ENCODE measurements at regions of chr4 and their contacts with region 1.

Region 1: GRCh38 chr4:98601708-98602107 is 56.7 kb downstream of the TSPAN5 start:
- DNase-seq: no peak
- H3K4me3 Mint-ChIP-seq: peak overlapping the region; percentile 72
- H3K27ac Mint-ChIP-seq: peak overlapping the region; percentile 95
- H3K4me1 Mint-ChIP-seq: peaks cover 54% of the 10 kb centered on the region
- H3K27me3 Mint-ChIP-seq: no peaks in the 10 kb centered on the region

Region 2: DNA sequence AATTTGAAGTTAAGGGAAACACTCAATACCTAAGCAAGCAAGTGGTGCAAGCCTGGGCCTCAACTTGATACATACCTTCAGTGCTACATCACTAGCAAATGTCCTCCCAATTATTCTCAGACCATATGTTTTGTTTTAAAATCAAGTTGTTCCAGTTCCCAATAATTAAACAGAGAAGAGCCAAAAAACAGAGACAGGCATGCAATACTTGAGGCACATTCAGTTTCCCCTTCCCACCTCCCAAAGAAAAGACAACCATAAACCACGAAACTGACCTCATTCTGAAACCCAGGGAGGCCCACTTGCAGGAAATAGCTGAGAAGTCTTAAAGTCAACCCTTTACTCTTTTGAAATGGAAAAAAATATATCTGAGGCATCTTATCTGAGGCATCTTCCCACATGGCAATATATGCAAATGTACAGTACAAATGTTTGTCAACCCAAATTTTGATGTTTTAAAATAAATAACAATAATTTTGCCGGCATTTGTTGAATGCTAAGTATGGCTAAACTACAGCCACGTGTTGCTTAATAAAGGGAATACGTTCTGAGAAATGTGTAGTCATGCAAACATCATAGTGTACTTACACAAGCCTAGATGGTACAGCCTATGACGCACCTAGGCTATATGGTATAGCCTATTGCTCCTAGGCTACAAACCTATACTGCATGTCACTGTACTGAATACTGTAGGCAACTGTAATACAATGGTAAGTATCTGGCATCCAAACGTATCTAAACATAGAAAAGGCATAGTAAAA is 90.8 kb before region 1 on chr4:
- intact Hi-C with region 1: loop called (anchors 2 kb)
- DNase-seq: peak; percentile 81
- H3K4me3 Mint-ChIP-seq: peak overlapping the region; percentile 73
- H3K27ac Mint-ChIP-seq: peak overlapping the region; percentile 78
- H3K4me1 Mint-ChIP-seq: peaks cover 62% of the 10 kb centered on the region
- H3K27me3 Mint-ChIP-seq: no peaks in the 10 kb centered on the region

Region 3: GRCh38 chr4:98639523-98639922 is 37.8 kb after region 1 on chr4:
- intact Hi-C with region 1: loop called (anchors 1 kb)
- DNase-seq: peak; percentile 77
- H3K4me3 Mint-ChIP-seq: peak overlapping the region; percentile 80
- H3K27ac Mint-ChIP-seq: peak overlapping the region; percentile 85
- H3K4me1 Mint-ChIP-seq: peaks cover 46% of the 10 kb centered on the region
- H3K27me3 Mint-ChIP-seq: no peaks in the 10 kb centered on the region

Region 4: DNA sequence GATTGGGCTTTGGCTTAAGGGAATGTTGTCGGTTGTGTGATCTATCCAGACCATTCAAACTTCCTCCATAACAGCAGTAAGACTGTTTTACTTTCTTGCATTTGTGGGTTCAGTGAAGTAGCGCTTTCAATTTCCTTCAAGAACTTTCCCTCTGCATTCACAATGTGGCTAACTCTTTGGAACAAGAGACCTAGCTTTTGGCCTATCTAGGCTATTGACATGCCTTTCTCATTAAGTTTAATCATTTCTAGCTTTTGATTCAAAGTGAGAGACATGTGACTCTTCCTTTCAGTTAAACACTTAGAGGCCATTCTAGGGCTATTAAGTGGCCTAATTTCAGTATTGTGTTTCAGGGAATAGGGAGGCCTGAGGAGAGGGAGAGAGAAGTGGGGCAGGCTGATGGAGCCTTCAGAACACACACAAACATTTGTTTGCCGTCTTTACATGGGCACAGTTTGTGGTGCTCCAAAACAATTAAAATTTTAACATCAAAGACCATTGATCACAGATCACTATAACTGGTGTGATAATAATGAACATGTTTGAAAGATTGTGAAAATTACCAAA is 452.8 kb after region 1 on chr4:
- intact Hi-C with region 1: loop called (anchors 5 kb)
- DNase-seq: no peak
- H3K4me3 Mint-ChIP-seq: peak overlapping the region; percentile 27
- H3K27ac Mint-ChIP-seq: peak overlapping the region; percentile 79
- H3K4me1 Mint-ChIP-seq: peaks cover 34% of the 10 kb centered on the region
- H3K27me3 Mint-ChIP-seq: no peaks in the 10 kb centered on the region

Region 5: GRCh38 chr4:99088481-99089365 is 487.0 kb after region 1 on chr4 and contains the start of gene ADH5:
- intact Hi-C with region 1: no loop called
- DNase-seq: peak; percentile 95
- H3K4me3 Mint-ChIP-seq: peak within 1 kb of the TSS; percentile 90
- H3K27ac Mint-ChIP-seq: peak within 1 kb of the TSS; percentile 96
- H3K4me1 Mint-ChIP-seq: peaks cover 35% of the 10 kb centered on the region
- H3K27me3 Mint-ChIP-seq: peaks cover 1% of the 10 kb centered on the region
- total RNA-seq, gene ADH5: 82.6 and 85.3 TPM in 2 replicates

Region 6: DNA sequence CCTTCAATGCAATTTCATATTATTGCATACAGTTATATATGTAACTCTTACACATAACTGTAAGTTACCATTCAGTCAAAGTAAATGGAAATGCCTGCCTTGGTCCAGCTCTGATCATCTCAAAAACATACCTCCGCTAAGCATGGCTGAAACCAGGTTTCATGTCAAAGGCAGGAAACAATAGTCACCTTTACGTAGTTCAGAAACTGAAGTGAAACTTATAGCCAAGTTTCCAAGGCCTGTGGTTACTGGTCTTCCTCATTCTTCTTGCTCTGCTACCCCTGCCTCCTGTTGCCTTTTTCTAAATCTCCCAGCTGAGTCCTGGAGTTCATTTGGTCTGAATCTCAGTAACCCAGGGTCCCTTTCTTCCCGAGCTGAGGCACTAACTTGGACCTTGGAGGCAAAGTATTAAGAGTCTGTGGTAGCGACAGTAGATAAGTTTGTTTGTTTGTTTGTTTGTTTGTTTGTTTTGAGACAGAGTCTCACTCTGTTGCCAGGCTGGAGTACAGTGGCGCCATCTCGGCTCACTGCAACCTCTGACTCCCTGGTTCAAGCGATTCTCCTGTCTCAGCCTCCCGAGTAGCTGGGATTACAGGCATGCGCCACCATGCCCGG is 1245.8 kb after region 1 on chr4:
- intact Hi-C with region 1: loop called (anchors 5 kb)
- DNase-seq: peak; percentile 84
- H3K4me3 Mint-ChIP-seq: peak overlapping the region; percentile 58
- H3K27ac Mint-ChIP-seq: peak overlapping the region; percentile 92
- H3K4me1 Mint-ChIP-seq: peaks cover 67% of the 10 kb centered on the region
- H3K27me3 Mint-ChIP-seq: no peaks in the 10 kb centered on the region

Measured in activated CD4-positive, alpha-beta T cell treated with anti-CD3 and anti-CD28 coated beads, Interleukin-2, amount 10 ng/mL, durations not matched to agents 24 days and 14 days (primary cell).